ENCODE measurements at regions of chr11 and their contacts with region 1.

Region 1: GRCh38 chr11:1515082-1516060 is 28.8 kb upstream of the MOB2 start:
- DNase-seq: peak; percentile 87
- ATAC-seq: peak; percentile 87

Region 2: GRCh38 chr11:1202776-1203504 is 312.4 kb before region 1 on chr11:
- intact Hi-C with region 1: loop called (anchors 1 kb)
- DNase-seq: peak; percentile 81
- ATAC-seq: peak; percentile 71

Region 3: DNA sequence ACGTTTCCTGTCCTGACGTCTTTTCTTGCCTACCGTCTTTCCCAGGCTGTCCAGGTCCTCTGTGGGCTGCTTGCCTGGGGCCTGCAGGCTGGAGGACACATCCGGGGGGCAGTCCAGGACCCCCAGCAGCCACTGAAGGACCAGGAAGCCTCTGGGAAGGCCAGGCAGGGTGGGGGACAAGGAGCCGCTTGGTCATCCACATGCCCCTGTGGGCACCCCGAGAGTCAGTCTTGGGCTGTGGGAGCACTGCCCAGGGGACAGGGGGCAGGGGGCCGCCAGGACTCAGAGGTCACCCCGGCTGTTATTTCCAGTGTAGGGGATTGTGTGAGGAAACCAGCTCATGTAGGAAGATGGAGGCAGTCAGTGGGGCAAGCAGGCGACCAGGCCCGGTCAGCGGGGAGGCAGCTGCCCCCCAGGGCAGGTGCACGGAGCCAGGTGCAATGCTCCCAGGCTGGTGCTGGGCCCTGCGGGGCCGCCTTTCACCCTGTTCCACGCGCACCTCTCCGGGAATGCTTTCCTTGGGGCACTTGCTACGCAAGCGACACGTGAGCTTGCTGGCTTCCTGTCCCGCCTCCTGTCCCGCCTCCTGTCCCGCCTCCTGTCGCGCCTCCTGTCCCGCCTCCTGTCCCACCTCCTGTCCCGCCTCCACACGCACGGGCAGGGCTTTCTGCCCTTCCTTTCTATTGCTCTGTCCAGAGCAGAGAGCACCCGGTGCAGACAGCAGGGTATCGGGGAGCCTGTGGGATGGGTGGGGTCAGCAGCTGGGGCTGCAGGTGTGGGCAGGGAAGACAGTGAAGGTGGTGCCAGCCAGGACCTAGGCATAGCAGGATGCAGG is 253.0 kb before region 1 on chr11:
- intact Hi-C with region 1: loop called (anchors 5 kb)
- DNase-seq: peak; percentile 94
- ATAC-seq: peak; percentile 96

Region 4: DNA sequence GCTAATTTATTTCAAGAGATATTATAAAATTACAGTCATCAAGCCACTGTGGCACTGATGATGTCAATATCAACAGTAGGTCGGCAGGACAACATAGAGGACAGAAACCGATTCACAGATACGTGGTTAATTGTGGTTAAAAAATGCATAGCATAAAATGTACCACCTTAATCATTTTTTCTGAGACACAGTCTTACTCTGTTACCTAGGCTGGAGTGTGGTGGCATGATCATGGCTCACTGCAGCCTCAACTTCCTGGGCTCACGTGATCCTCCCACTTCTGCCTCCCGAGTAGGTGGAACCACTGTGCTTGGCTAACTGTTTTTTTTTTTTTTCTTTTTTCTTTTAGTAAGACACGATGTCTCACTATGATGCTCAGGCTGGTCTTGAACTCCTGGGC is 184.9 kb before region 1 on chr11:
- intact Hi-C with region 1: no loop called
- DNase-seq: no peak
- ATAC-seq: no peak

Region 5: GRCh38 chr11:1341928-1342524 is 173.3 kb before region 1 on chr11:
- intact Hi-C with region 1: loop called (anchors 2 kb)
- DNase-seq: no peak
- ATAC-seq: peak; percentile 44

Region 6: GRCh38 chr11:1458340-1459218 is 56.8 kb before region 1 on chr11:
- intact Hi-C with region 1: loop called (anchors 10 kb)
- DNase-seq: no peak
- ATAC-seq: peak; percentile 57

Region 7: DNA sequence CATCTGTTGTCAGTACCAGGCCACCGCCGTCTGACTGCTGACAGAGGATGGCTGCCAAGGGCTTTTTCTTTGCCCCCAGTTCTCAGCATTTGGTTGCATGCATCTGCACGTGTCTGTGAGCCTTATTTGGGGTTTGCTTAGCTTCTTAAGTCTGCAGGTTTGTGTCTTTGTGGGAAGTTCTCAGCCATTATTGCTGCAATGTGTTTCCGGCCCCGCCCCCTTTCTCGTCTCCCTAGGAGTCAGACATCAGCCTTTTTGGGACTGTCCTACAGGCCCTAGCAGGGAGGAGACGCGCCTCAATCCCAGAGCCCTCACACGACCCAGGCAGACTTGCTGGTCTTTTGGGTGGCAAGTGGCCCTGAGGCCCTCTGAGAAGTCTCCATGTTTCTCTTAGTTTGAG is 36.8 kb before region 1 on chr11:
- intact Hi-C with region 1: loop called (anchors 5 kb)
- DNase-seq: peak; percentile 76
- ATAC-seq: no peak

Region 8: GRCh38 chr11:2027708-2028107 is 512.3 kb after region 1 on chr11:
- intact Hi-C with region 1: no loop called
- DNase-seq: no peak
- ATAC-seq: no peak